ENCODE measurements at regions of chr5 and their contacts with region 1.

Region 1: GRCh38 chr5:33969572-33970452 is 14.7 kb downstream of the SLC45A2 start:
- DNase-seq: peak; percentile 27
- ATAC-seq: peak; percentile 93
- H3K4me3 ChIP-seq: no peak overlapping the region
- H3K27ac ChIP-seq: no peak overlapping the region
- H3K4me1 ChIP-seq: peaks cover 17% of the 10 kb centered on the region
- H3K27me3 ChIP-seq: no peaks in the 10 kb centered on the region
- CTCF ChIP-seq: peak; percentile 80 to 90 (median 88)
- EP300 ChIP-seq: no peak
- POLR2A ChIP-seq: no peak
- RAD21 ChIP-seq: peak; percentile 94

Region 2: DNA sequence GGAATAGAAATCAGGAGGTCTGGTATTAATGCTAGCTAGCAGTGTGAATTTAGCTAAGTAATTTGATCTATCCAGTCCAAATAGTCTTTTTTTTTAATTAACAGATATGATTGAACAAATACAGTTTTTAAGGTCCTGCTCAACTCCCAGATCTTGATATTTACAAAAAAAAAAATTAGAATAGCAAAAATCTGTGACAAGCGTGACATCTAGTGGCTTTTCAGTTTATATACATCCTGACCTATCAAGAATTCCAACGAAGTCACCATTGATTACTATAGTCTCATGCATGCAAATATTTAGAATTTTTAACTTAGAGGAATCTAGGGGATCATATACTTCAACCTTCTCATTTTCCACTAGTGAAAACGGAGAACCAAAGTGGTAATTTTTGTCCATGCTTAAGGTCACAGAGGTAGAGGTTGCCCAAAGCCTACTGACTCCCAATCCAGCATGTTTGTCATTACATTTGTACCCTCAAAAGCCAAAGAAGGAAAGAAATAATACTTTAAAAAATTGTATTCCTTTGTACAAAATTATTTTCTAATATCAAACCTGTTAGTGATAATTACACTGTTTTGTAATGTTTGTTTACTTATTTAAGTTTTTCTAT is 546.7 kb before region 1 on chr5:
- CTCF ChIA-PET with region 1: interaction called, 14 read pairs
- POLR2A ChIA-PET with region 1: no interaction called
- RAD21 ChIA-PET with region 1: no interaction called
- SMC1A ChIA-PET with region 1: interaction called, 3 read pairs
- in situ Hi-C with region 1: no loop called
- intact Hi-C with region 1: no loop called
- DNase-seq: no peak
- ATAC-seq: peak; percentile 61
- H3K4me3 ChIP-seq: no peak overlapping the region
- H3K27ac ChIP-seq: no peak overlapping the region
- H3K4me1 ChIP-seq: no peaks in the 10 kb centered on the region
- H3K27me3 ChIP-seq: no peaks in the 10 kb centered on the region
- CTCF ChIP-seq: peak; percentile 26 to 51 (median 33); a peak in 4 of 6 replicates
- EP300 ChIP-seq: no peak
- POLR2A ChIP-seq: no peak
- RAD21 ChIP-seq: peak; percentile 57

Region 3: DNA sequence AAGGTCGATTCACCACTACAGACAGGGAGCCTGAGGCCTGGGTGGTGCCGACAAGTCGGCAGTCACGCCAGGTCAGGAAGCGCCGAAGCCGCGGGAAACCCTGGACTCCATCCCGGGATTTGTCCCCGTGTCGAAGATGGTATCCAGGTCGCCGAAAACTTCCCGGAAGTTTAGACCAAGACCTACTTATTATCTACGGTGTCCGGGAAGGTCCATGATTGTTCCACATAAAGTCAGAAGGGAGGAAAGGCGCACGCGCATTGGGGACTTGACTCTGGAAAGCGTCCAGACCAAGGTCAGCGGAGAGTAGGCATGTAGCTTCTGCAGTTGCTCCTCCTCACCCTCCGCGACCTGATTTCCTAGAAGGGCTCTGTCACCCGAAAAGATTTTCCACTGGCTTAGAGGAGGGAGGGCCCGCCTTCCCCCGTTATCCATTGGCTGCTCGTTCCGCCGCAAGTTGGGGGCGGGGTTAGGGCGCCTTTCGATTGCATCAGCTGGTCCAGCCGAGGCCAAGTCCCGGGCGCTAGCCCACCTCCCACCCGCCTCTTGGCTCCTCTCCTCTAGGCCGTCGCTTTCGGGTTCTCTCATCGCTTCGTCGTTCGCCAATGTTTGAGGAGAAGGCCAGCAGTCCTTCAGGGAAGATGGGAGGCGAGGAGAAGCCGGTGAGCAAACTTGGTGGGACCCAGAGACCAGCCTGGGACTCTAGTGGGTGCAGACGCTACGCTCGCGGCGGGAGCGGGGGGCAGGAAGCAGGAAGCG is 529.2 kb before region 1 on chr5 and contains the start of gene TARS1:
- CTCF ChIA-PET with region 1: interaction called, 70 read pairs
- POLR2A ChIA-PET with region 1: interaction called, 5 read pairs
- RAD21 ChIA-PET with region 1: interaction called, 34 read pairs
- SMC1A ChIA-PET with region 1: interaction called, 43 read pairs
- in situ Hi-C with region 1: no loop called
- intact Hi-C with region 1: loop called (anchors 1 kb)
- DNase-seq: peak; percentile 100
- ATAC-seq: peak; percentile 94
- H3K4me3 ChIP-seq: peak within 1 kb of the TSS; percentile 96
- H3K27ac ChIP-seq: peak within 1 kb of the TSS; percentile 92
- H3K4me1 ChIP-seq: no peaks in the 10 kb centered on the region
- H3K27me3 ChIP-seq: no peaks in the 10 kb centered on the region
- CTCF ChIP-seq: no peak
- EP300 ChIP-seq: 0 out of 4 replicates have a peak, but pooled peaks of 1 of the 2 experiments have one; percentile 21
- POLR2A ChIP-seq: peak; percentile 95
- RAD21 ChIP-seq: no peak
- polyA plus RNA-seq, gene TARS1: 163 to 244 TPM

Region 4: DNA sequence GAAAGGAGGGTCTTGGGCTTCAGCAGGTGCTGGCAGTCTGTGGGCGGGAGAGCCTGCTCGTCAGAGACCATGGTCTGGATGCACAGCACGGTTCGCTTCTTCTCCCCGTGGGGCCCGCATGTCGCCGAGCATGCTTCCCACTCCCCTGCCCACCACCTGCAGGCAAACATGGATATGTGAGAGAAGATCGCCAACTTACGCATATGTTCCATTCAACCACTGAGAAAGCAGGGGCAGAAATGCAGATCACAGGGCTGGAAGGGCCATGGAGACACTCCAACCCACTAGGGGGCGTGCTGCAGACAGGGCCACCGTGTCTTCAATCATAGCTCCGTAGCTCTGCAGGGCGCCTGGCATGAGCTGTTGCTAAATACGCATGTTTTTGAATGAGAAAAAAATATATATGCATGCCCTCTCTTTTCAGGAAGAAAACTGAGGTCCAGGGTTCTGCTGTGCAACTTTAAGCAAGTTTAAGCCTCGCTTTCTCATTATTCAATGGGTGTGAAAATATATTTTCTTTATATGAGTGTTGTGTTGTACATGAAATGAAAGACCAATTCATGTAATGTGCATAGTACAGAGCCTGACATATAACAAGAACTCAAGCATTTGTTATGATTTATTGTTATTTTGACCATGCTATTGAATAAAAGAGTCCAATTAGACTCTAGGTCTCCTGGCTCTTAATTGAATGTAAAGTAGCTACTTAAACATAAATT is 381.0 kb before region 1 on chr5:
- CTCF ChIA-PET with region 1: interaction called, 13 read pairs
- POLR2A ChIA-PET with region 1: no interaction called
- RAD21 ChIA-PET with region 1: interaction called, 7 read pairs
- SMC1A ChIA-PET with region 1: interaction called, 7 read pairs
- in situ Hi-C with region 1: no loop called
- intact Hi-C with region 1: no loop called
- DNase-seq: no peak
- ATAC-seq: peak; percentile 83
- H3K4me3 ChIP-seq: no peak overlapping the region
- H3K27ac ChIP-seq: no peak overlapping the region
- H3K4me1 ChIP-seq: no peaks in the 10 kb centered on the region
- H3K27me3 ChIP-seq: no peaks in the 10 kb centered on the region
- CTCF ChIP-seq: peak; percentile 35 to 59 (median 53)
- EP300 ChIP-seq: no peak
- POLR2A ChIP-seq: no peak
- RAD21 ChIP-seq: peak; percentile 55

Region 5: DNA sequence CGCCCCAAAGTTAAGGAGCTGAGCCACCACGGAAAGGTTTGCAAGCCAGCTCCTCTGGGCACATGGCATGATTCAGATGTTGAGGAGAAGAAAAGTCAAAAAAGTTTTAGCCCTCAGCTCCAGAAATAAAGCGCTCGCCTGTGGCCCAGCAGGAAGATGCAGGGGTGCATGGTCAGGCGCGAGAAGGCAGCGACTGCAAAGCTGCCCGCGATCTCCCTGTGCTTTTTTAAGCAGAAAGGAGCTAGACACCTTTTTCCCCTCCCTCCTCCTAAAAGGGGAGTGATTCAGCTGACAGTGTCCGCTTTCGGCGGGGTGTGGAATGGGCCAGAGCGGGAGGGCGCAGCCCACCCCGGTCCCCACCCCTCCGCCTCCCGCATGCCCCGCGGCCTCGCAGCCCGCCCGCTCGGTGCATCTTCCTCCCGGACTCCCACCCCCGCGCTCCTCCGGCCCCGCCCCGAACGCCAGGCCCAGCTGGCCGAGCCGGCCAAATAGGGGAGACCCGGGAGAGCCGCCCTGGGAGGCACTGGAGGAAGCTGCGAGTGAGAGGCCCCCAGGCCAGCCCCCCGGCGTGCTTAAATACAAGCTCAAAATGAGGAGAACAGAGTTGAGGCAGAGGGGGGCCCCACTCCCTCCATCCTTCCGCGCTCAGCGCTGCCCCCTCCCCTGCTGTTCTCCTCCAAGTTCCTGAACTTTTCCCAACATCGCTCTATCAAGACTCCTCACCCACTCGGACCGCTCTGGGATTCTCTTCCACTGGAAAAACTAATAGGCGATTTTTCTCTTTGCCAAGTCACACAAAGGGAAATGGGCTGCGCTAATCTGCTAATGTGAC is 77.8 kb before region 1 on chr5 and contains the start of gene ADAMTS12:
- CTCF ChIA-PET with region 1: no interaction called
- POLR2A ChIA-PET with region 1: no interaction called
- RAD21 ChIA-PET with region 1: no interaction called
- SMC1A ChIA-PET with region 1: no interaction called
- in situ Hi-C with region 1: no loop called
- intact Hi-C with region 1: no loop called
- DNase-seq: no peak
- ATAC-seq: peak; percentile 27
- H3K4me3 ChIP-seq: peak within 1 kb of the TSS; percentile 67
- H3K27ac ChIP-seq: peak within 1 kb of the TSS; percentile 59
- H3K4me1 ChIP-seq: peaks cover 5% of the 10 kb centered on the region
- H3K27me3 ChIP-seq: no peaks in the 10 kb centered on the region
- CTCF ChIP-seq: no peak
- EP300 ChIP-seq: no peak
- POLR2A ChIP-seq: no peak
- RAD21 ChIP-seq: no peak
- polyA plus RNA-seq, gene ADAMTS12: 29.4 to 35.8 TPM

Region 6: DNA sequence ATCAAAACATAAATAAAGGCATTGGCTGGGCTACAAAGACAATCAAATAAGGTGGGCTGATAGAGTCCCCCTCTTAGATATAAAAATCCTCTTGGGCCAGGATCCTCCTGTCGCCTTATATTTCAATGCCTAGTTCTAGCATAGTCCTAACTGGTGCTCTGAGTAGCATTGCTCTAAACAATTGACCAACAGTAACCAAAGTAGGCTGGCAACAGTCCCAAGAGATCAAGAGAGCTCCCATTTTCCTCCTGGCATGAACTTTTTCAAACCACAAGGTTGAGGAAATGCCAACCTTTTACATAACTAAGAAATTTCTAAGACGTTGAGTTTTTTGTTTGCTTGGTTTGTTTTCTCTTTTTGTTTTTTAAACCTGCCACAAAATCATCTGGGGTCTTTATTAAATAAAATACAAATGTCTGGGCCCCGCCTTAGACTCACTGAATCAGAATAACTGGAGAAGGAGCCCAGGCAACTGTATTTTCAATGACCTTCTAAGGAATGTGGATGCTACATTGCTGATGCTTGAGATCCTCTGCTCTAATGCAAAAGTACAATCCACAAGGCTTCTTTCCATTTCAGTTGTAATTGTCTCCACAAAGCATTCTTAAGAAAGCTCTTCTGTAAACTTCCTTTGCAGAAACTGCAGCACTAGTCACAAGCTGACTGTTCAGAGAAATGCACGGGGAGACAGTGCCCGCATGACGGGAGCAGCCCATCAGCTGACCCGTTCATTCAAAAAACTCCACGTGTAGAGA is 11.8 kb after region 1 on chr5:
- CTCF ChIA-PET with region 1: interaction called, 12 read pairs
- POLR2A ChIA-PET with region 1: no interaction called
- RAD21 ChIA-PET with region 1: interaction called, 7 read pairs
- SMC1A ChIA-PET with region 1: interaction called, 5 read pairs
- in situ Hi-C with region 1: no loop called
- intact Hi-C with region 1: no loop called
- DNase-seq: no peak
- ATAC-seq: no peak
- H3K4me3 ChIP-seq: no peak overlapping the region
- H3K27ac ChIP-seq: no peak overlapping the region
- H3K4me1 ChIP-seq: no peaks in the 10 kb centered on the region
- H3K27me3 ChIP-seq: no peaks in the 10 kb centered on the region
- CTCF ChIP-seq: no peak
- EP300 ChIP-seq: no peak
- POLR2A ChIP-seq: no peak
- RAD21 ChIP-seq: no peak

Measured in GM12878 (cell line).